ENCODE measurements at regions of chr17 and their contacts with region 1.

Region 1: DNA sequence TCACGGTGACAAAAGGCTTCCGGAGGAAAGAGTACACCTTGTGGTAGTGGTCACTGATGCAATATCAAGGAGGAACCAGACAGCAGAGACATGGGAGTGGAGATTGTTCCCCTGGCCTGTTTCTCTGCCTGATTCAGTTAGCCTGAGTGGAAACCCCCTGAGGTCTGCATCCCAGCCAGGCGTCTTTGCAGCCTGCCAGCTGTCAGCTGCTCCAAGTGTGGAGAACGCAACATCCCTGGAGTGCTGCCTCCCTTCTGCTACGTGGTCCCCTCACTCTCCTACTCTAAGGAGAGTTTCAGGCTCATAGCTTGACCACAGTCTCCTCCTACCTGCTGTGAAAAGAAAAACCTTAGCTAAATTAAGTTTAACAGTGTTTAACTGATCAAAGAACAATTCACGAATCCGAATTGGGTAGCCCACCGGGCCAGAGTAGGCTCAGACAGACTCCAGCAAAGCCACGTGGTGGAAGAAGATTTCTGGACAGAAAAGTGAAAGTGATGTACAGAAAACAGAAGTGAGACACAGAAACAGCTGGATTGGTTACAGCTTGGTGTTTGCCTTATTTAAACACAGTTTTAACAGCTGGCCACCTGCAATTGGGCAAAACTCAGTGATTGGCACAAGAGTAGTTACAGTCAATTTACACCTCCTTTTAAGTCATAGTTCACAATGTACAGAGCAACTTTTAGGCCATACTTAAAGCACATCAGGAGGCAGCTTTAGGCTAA is 188.6 kb downstream of the DNAH9 start:
- DNase-seq: no peak
- H3K27ac ChIP-seq: no peak overlapping the region
- CTCF ChIP-seq: no peak

Region 2: GRCh38 chr17:11589716-11590115 is 197.2 kb before region 1 on chr17:
- CTCF ChIA-PET with region 1: no interaction called
- POLR2A ChIA-PET with region 1: no interaction called
- DNase-seq: no peak
- H3K27ac ChIP-seq: no peak overlapping the region
- CTCF ChIP-seq: no peak

Region 3: GRCh38 chr17:11768106-11768505 is 18.8 kb before region 1 on chr17:
- CTCF ChIA-PET with region 1: interaction called, 13 read pairs
- POLR2A ChIA-PET with region 1: no interaction called
- DNase-seq: no peak
- H3K27ac ChIP-seq: no peak overlapping the region
- CTCF ChIP-seq: no peak

Region 4: GRCh38 chr17:11797803-11798202 is 10.9 kb after region 1 on chr17:
- CTCF ChIA-PET with region 1: no interaction called
- POLR2A ChIA-PET with region 1: no interaction called
- DNase-seq: no peak
- H3K27ac ChIP-seq: no peak overlapping the region
- CTCF ChIP-seq: no peak